Breast epithelium (tissue), 4 donors: ENCODE measurements at regions of chr17 and their contacts with region 1.

Region 1: GRCh38 chr17:40453881-40454612 is 10.8 kb downstream of the IGFBP4 start:
- DNase-seq: no peak
- H3K4me3 ChIP-seq: no peak overlapping the region
- H3K27ac ChIP-seq: peak overlapping the region; percentile 86 to 94
- H3K4me1 ChIP-seq: peaks cover 7 to 10% of the 10 kb centered on the region in 2 donors
- H3K27me3 ChIP-seq: no peaks in the 10 kb centered on the region
- CTCF ChIP-seq: no peak
- POLR2A ChIP-seq: no peak

Region 2: GRCh38 chr17:40443583-40444327 is 10.3 kb before region 1 on chr17:
- intact Hi-C with region 1: no loop called
- DNase-seq: peak in 1 of 2 donors; percentile 81
- H3K4me3 ChIP-seq: peak overlapping the region; percentile 75 to 98 (median 77)
- H3K27ac ChIP-seq: peak overlapping the region; percentile 94 to 100
- H3K4me1 ChIP-seq: peaks cover 14 to 16% of the 10 kb centered on the region in 2 donors
- H3K27me3 ChIP-seq: no peaks in the 10 kb centered on the region
- CTCF ChIP-seq: peak in 2 of 3 donors; percentile 18 to 29
- POLR2A ChIP-seq: no peak

Region 3: DNA sequence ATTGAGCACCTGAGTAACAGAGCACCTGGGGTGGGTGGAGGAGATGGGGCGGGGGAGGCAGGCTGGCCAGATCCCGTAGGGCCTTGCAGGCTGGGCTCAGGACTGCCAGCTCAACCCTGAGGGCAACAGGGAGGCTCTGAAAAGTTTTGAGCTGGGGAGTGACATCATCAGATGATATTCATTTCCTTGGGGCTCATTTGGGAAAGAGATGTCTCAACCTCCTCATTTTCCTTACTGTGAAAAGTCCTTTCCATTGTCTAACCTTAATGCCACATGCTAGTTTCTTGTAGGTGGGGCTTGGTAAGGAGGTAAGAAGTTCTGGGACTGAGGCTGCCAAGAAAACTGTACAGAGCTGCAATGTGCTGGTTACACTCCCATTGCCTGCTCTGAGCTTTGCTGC is 43.6 kb after region 1 on chr17:
- intact Hi-C with region 1: loop called (anchors 1 kb)
- DNase-seq: peak in 1 of 2 donors; percentile 29
- H3K4me3 ChIP-seq: peak overlapping the region in 2 of 3 donors; percentile 57 to 64
- H3K27ac ChIP-seq: peak overlapping the region; percentile 77 to 87
- H3K4me1 ChIP-seq: peaks cover 0 to 3% of the 10 kb centered on the region in 2 donors
- H3K27me3 ChIP-seq: no peaks in the 10 kb centered on the region
- CTCF ChIP-seq: no peak
- POLR2A ChIP-seq: no peak

Region 4: DNA sequence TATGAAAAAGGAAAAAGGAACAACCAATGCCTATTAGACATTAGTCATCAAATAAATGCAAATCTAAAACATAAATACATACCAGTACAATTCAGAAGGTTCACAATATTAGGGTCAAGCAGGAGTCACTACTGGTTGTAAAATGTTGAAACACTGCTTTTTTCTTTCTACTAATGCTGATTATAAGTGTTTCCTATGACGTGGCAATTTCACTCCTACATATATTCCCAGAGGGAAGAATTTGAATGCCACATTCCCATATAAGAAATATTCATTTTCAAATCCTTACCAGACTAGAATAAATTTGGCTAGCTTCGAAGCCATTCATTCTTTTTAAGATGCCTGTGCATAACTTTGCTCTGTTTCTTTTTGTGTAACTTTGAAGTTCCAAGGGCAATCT is 769.8 kb after region 1 on chr17:
- intact Hi-C with region 1: no loop called
- DNase-seq: no peak
- H3K4me3 ChIP-seq: no peak overlapping the region
- H3K27ac ChIP-seq: no peak overlapping the region
- H3K4me1 ChIP-seq: no peaks in the 10 kb centered on the region
- H3K27me3 ChIP-seq: no peaks in the 10 kb centered on the region
- CTCF ChIP-seq: no peak
- POLR2A ChIP-seq: no peak